ENCODE measurements at regions of chr2 and their contacts with region 1.

Region 1: DNA sequence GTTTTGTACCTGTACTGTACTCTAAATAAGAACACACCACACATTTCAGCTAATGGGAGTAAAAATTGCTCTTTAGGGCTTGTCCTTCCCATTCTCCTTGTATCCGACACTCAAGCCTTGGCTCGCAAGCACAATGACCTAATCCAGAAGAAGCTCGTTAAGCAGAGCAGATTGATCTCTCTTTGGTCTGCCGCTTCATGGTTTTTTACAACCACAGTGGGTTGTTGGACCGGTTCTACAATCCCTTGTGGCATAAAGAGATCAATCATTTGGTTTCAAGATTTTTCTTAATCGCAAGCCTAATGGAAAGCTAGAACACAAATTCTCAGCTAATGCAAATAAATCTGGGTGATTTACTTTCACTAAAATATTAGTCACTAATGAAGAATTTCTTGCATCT is 662.1 kb downstream of the LRP1B start:
- DNase-seq: peak; percentile 57
- H3K4me3 ChIP-seq: no peak overlapping the region
- H3K27ac ChIP-seq: no peak overlapping the region
- H3K4me1 ChIP-seq: no peaks in the 10 kb centered on the region
- H3K27me3 ChIP-seq: no peaks in the 10 kb centered on the region
- CTCF ChIP-seq: no peak

Region 2: DNA sequence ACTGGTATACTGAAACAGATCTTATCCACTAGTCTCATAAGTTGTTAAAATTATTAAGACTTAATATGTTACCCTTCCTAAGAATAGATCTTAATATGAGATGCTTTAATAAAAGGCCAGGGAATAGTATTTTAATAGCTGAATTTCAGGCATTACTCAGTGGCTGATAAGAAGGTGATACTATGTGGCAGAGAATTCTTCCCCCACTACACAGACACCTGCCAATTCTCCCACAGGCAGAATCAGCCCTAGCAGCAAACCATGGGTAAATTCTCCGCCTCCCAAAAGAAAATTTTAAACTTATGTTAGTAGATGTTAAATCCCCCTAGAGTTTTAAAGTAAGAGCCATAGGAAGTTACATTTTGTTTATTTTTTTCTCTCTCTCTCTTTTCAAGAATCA is 226.8 kb before region 1 on chr2:
- CTCF ChIA-PET with region 1: no interaction called
- dilution Hi-C with region 1: no loop called
- in situ Hi-C with region 1: no loop called
- intact Hi-C with region 1: no loop called
- DNase-seq: no peak
- H3K4me3 ChIP-seq: no peak overlapping the region
- H3K27ac ChIP-seq: no peak overlapping the region
- H3K4me1 ChIP-seq: no peaks in the 10 kb centered on the region
- H3K27me3 ChIP-seq: no peaks in the 10 kb centered on the region
- CTCF ChIP-seq: no peak

Region 3: GRCh38 chr2:141501752-141502151 is 33.0 kb after region 1 on chr2:
- CTCF ChIA-PET with region 1: no interaction called
- dilution Hi-C with region 1: no loop called
- in situ Hi-C with region 1: no loop called
- intact Hi-C with region 1: loop called (anchors 5 kb)
- DNase-seq: no peak
- H3K4me3 ChIP-seq: no peak overlapping the region
- H3K27ac ChIP-seq: no peak overlapping the region
- H3K4me1 ChIP-seq: no peaks in the 10 kb centered on the region
- H3K27me3 ChIP-seq: peaks cover 2% of the 10 kb centered on the region
- CTCF ChIP-seq: no peak

Region 4: GRCh38 chr2:143034292-143035074 is 1565.7 kb after region 1 on chr2:
- CTCF ChIA-PET with region 1: no interaction called
- dilution Hi-C with region 1: no loop called
- in situ Hi-C with region 1: no loop called
- intact Hi-C with region 1: no loop called
- DNase-seq: peak; percentile 73
- H3K4me3 ChIP-seq: no peak overlapping the region
- H3K27ac ChIP-seq: no peak overlapping the region
- H3K4me1 ChIP-seq: no peaks in the 10 kb centered on the region
- H3K27me3 ChIP-seq: no peaks in the 10 kb centered on the region
- CTCF ChIP-seq: peak; percentile 82 to 98

Measured in mammary epithelial cell (primary cell).